ENCODE measurements at regions of chr2 and their contacts with region 1.

Region 1: GRCh38 chr2:229586746-229587705 is 127.3 kb downstream of the DNER start:
- DNase-seq: peak; percentile 87
- H3K27ac ChIP-seq: peak overlapping the region; percentile 88
- CTCF ChIP-seq: peak; percentile 90

Region 2: GRCh38 chr2:229133155-229133772 is 453.8 kb before region 1 on chr2:
- CTCF ChIA-PET with region 1: interaction called, 10 read pairs
- POLR2A ChIA-PET with region 1: no interaction called
- DNase-seq: peak; percentile 39
- H3K27ac ChIP-seq: no peak overlapping the region
- CTCF ChIP-seq: peak; percentile 69

Region 3: GRCh38 chr2:229431327-229431954 is 155.6 kb before region 1 on chr2:
- CTCF ChIA-PET with region 1: interaction called, 14 read pairs
- POLR2A ChIA-PET with region 1: no interaction called
- DNase-seq: peak; percentile 32
- H3K27ac ChIP-seq: no peak overlapping the region
- CTCF ChIP-seq: peak; percentile 69